Activated CD4-positive, alpha-beta T cell treated with anti-CD3 and anti-CD28 coated beads for 36 hours (primary cell): ENCODE measurements at regions of chr2 and their contacts with region 1.

Region 1: GRCh38 chr2:169109502-169110409 is 40.4 kb downstream of the DHRS9 start:
- DNase-seq: peak; percentile 86
- ATAC-seq: peak; percentile 34
- H3K4me3 Mint-ChIP-seq: no peak overlapping the region
- H3K27ac Mint-ChIP-seq: no peak overlapping the region
- H3K4me1 Mint-ChIP-seq: peaks cover 45% of the 10 kb centered on the region
- H3K27me3 Mint-ChIP-seq: peaks cover 3% of the 10 kb centered on the region

Region 2: DNA sequence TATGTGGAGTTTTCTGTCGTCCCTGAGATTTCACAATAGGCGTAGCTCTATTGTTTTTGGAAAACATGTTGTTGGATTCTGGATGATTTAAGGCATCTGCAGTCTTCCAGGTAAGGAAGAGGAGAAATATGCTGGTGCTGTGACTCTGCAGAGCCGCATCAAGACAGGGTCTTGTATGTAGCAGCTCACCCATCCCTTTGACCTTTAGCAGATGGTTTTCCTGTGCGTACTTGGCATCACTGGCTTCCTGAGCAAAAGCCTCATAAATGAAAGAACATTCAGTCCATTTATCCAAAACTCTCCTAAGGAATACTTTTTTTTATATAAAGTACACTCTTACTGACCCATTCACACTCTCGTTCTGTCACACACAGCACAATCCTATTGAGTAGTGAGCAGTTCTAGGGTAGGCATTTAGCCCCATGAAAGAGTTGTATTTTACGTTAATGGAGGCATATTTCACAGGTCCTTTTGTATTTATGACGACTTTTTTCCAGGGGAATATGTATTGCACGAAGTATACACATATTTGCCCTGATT is 1306.2 kb before region 1 on chr2:
- CTCF ChIA-PET with region 1: no interaction called
- POLR2A ChIA-PET with region 1: no interaction called
- intact Hi-C with region 1: no loop called
- DNase-seq: no peak
- ATAC-seq: no peak
- H3K4me3 Mint-ChIP-seq: no peak overlapping the region
- H3K27ac Mint-ChIP-seq: no peak overlapping the region
- H3K4me1 Mint-ChIP-seq: no peaks in the 10 kb centered on the region
- H3K27me3 Mint-ChIP-seq: no peaks in the 10 kb centered on the region

Region 3: DNA sequence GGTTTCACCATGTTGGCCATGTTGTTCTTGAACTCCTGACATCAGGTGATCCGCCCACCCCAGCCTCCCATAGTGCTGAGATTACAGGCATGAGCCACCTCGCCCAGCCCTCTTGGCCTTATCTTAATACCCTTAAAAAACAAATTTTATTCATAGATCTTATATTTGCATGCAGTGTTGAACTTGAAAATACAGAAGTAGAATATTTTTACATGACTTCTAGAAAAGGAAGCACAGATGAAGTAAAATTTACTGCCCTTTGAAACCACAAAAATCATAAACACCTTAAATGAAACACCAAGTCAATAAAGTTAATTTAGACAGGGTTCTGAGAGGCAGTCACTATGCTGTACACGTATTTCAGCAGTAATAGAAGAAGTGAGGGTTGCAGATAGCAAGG is 508.0 kb before region 1 on chr2:
- CTCF ChIA-PET with region 1: no interaction called
- POLR2A ChIA-PET with region 1: no interaction called
- intact Hi-C with region 1: no loop called
- DNase-seq: no peak
- ATAC-seq: no peak
- H3K4me3 Mint-ChIP-seq: no peak overlapping the region
- H3K27ac Mint-ChIP-seq: no peak overlapping the region
- H3K4me1 Mint-ChIP-seq: peaks cover 17% of the 10 kb centered on the region
- H3K27me3 Mint-ChIP-seq: no peaks in the 10 kb centered on the region

Region 4: GRCh38 chr2:168968342-168968741 is 141.4 kb before region 1 on chr2:
- CTCF ChIA-PET with region 1: interaction called, 12 read pairs
- POLR2A ChIA-PET with region 1: no interaction called
- intact Hi-C with region 1: no loop called
- DNase-seq: no peak
- ATAC-seq: no peak
- H3K4me3 Mint-ChIP-seq: no peak overlapping the region
- H3K27ac Mint-ChIP-seq: no peak overlapping the region
- H3K4me1 Mint-ChIP-seq: peaks cover 22% of the 10 kb centered on the region
- H3K27me3 Mint-ChIP-seq: no peaks in the 10 kb centered on the region

Region 5: GRCh38 chr2:169082995-169083394 is 26.8 kb before region 1 on chr2:
- CTCF ChIA-PET with region 1: interaction called, 14 read pairs
- POLR2A ChIA-PET with region 1: no interaction called
- intact Hi-C with region 1: no loop called
- DNase-seq: no peak
- ATAC-seq: peak; percentile 49
- H3K4me3 Mint-ChIP-seq: no peak overlapping the region
- H3K27ac Mint-ChIP-seq: peak overlapping the region; percentile 13
- H3K4me1 Mint-ChIP-seq: peaks cover 9% of the 10 kb centered on the region
- H3K27me3 Mint-ChIP-seq: no peaks in the 10 kb centered on the region

Region 6: DNA sequence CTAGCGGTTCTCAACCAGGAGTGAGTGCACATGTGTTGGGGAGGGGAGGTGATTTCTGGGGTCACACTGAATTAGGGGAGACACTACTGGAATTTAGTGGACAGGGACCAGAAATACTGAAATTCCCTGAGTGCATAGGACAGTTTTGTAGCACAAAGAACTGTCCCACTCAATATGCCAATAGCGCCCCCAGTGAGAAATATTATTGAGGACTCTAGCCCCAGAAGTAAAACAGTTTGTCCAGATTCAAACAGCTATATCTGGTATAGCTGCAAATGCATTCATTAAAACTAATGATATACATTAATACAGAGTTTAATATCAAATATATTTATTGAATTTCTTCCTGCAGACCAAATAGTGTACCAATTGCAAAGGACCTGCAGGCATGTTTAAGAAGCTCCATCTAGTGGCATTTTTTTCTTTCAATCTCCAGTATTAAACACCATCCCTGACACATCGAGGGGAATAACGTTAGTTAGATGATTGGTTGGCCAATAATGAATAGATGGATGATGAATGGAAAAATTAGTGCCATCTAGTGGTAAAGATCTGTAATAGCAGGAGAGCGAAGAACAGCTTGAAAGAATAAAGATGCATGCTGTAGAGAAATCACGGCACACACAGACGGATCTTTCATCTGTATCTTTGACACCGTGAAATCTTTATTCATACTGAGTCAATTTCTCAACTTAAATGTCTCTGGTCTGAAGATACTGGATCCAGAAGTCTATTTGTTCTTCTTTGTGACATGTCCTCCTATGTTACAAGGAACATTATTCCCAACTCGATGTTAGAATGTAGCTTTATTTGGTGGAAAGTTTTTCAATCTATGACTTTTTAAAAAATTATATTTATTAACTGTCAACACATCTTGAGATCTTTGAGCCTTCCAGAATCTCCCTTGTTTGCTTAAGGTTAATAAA is 22.1 kb after region 1 on chr2:
- CTCF ChIA-PET with region 1: interaction called, 92 read pairs
- POLR2A ChIA-PET with region 1: interaction called, 3 read pairs
- intact Hi-C with region 1: loop called (anchors 1 kb)
- DNase-seq: no peak
- ATAC-seq: peak; percentile 97
- H3K4me3 Mint-ChIP-seq: no peak overlapping the region
- H3K27ac Mint-ChIP-seq: no peak overlapping the region
- H3K4me1 Mint-ChIP-seq: no peaks in the 10 kb centered on the region
- H3K27me3 Mint-ChIP-seq: peaks cover 2% of the 10 kb centered on the region

Region 7: DNA sequence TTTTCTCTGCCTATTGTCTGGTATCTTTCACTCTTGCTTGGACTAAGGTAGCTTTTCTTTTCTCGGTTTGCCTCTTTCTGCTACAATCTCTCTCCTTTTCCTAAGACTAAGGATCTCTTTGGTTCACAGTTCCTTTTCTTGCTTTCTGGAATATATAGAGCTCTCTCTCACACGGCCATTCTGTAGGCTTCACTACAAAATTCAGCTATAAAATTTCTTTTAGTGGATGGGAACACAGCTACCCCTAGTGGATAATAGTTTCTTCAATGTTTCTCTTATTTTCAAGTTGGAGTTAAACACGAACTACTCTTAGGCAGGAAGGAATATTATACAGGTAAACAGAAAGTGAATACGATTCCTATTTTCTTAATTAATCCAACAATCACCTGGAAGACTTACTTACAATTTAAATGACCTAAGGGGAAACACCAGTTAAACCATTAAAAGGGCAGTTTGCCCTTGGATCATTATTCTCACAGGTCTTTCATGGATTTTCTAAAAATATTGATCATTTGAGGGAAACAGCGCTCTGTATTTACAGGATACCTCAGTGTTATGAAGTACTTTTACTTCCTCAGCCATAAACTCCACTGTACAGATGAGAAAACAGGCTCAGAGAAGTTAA is 112.1 kb after region 1 on chr2:
- CTCF ChIA-PET with region 1: interaction called, 3 read pairs
- POLR2A ChIA-PET with region 1: no interaction called
- intact Hi-C with region 1: loop called in 1 of 2 experiments (anchors 5 kb)
- DNase-seq: no peak
- ATAC-seq: no peak
- H3K4me3 Mint-ChIP-seq: no peak overlapping the region
- H3K27ac Mint-ChIP-seq: no peak overlapping the region
- H3K4me1 Mint-ChIP-seq: no peaks in the 10 kb centered on the region
- H3K27me3 Mint-ChIP-seq: no peaks in the 10 kb centered on the region

Region 8: DNA sequence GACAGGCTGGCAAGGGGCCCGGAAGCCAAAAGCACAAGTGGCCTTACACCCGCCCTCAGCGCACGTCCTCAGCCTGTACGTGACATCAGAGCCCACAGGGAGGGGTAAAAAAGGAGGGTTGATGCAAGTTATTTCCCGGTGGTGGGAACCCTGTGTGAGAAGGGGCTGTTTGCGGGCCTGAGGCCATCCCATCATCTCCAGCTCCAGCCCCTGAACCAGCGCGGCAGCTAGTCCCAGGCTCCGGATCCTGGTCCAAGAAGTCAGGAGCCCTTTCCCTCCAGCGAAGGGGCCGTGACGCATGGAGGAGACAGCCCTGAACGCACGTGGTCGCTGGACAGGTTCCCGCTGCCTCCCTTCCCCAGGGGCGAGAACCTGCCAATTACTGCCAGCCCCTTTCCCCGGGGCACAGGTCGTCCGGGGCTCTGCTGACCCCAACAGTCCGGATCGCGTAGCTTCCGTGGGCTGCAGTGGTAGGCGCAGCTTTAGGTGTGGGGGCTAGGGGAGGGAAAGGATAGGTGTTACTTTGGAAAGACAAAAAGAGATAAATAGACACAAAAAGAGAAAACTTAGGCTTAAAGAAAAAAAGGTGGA is 253.9 kb after region 1 on chr2:
- CTCF ChIA-PET with region 1: no interaction called
- POLR2A ChIA-PET with region 1: no interaction called
- intact Hi-C with region 1: loop called (anchors 5 to 10 kb)
- DNase-seq: peak; percentile 80
- ATAC-seq: peak; percentile 73
- H3K4me3 Mint-ChIP-seq: peak overlapping the region; percentile 86
- H3K27ac Mint-ChIP-seq: peak overlapping the region; percentile 49
- H3K4me1 Mint-ChIP-seq: peaks cover 29% of the 10 kb centered on the region
- H3K27me3 Mint-ChIP-seq: peaks cover 38% of the 10 kb centered on the region

Region 9: GRCh38 chr2:169438460-169439072 is 328.8 kb after region 1 on chr2:
- CTCF ChIA-PET with region 1: no interaction called
- POLR2A ChIA-PET with region 1: no interaction called
- intact Hi-C with region 1: no loop called
- DNase-seq: no peak
- ATAC-seq: no peak
- H3K4me3 Mint-ChIP-seq: no peak overlapping the region
- H3K27ac Mint-ChIP-seq: no peak overlapping the region
- H3K4me1 Mint-ChIP-seq: no peaks in the 10 kb centered on the region
- H3K27me3 Mint-ChIP-seq: peaks cover 21% of the 10 kb centered on the region